ENCODE measurements at regions of chr1 and their contacts with region 1.

Region 1: DNA sequence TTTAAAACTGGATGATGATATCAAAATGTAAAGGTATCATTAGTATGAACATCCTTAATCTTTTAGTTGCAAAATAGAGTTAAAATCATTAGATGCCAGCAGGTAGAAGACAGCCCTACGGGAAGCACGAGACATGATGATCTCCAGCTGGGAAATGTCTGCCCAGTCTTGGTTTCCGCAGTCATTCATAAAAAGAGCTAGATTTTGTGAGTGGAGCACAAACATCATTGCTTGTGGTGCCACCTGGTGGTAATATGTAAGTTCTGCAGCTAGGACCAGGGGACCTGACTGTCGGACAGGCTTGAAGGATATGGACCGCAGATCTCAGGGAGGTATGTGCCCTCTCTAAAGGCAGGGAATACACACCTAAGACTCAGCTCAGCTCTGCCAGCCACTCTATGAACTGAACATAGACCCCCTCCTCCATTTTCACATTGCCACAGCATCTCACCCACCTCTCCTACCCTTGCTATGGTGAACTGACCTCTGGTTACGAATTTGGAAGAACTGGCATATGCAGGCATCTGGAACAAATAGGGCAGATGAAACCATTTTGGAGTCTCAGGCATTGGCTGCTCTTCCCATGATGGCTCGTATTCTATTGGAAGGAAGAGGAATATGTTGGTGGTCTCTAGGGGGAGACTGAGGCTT is 9.2 kb downstream of the FCMR start:
- DNase-seq: peak; percentile 96
- H3K4me3 Mint-ChIP-seq: no peak overlapping the region
- H3K27ac Mint-ChIP-seq: no peak overlapping the region
- H3K4me1 Mint-ChIP-seq: peaks cover 28% of the 10 kb centered on the region
- H3K27me3 Mint-ChIP-seq: peaks cover 43% of the 10 kb centered on the region
- CTCF ChIP-seq: peak; percentile 94

Region 2: GRCh38 chr1:206635080-206635977 is 277.2 kb before region 1 on chr1 and contains the start of gene DYRK3:
- CTCF ChIA-PET with region 1: interaction called, 153 read pairs
- POLR2A ChIA-PET with region 1: interaction called, 20 read pairs
- intact Hi-C with region 1: loop called (anchors 1 kb)
- DNase-seq: peak; percentile 99
- H3K4me3 Mint-ChIP-seq: peak within 1 kb of the TSS; percentile 89
- H3K27ac Mint-ChIP-seq: peak within 1 kb of the TSS; percentile 82
- H3K4me1 Mint-ChIP-seq: peaks cover 38% of the 10 kb centered on the region
- H3K27me3 Mint-ChIP-seq: no peaks in the 10 kb centered on the region
- CTCF ChIP-seq: no peak
- total RNA-seq, gene DYRK3: 45.4 and 58.5 TPM in 2 replicates

Region 3: DNA sequence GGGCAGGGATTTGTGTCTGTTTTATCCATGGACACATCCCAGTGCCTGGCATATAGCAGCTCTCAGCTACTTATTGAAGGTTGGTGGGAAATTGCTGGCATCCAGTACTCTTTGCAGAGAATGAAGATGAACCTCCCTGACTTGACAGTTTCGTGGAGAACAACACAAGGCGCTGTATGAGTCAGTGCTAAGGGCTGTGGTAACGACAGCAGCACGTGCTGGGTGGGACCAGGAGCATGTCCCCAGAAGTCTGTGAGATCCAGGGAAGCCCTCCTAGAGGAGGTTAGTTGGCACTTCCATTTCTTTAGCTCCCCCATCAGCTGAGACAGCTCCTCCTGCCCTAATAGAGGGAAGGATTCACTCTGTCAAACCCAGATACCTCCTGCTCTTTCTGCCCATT is 167.9 kb before region 1 on chr1:
- CTCF ChIA-PET with region 1: interaction called, 93 read pairs
- POLR2A ChIA-PET with region 1: interaction called, 3 read pairs
- intact Hi-C with region 1: loop called (anchors 1 kb)
- DNase-seq: no peak
- H3K4me3 Mint-ChIP-seq: no peak overlapping the region
- H3K27ac Mint-ChIP-seq: no peak overlapping the region
- H3K4me1 Mint-ChIP-seq: peaks cover 5% of the 10 kb centered on the region
- H3K27me3 Mint-ChIP-seq: peaks cover 8% of the 10 kb centered on the region
- CTCF ChIP-seq: no peak

Region 4: GRCh38 chr1:206826405-206826804 is 86.2 kb before region 1 on chr1:
- CTCF ChIA-PET with region 1: interaction called, 52 read pairs
- POLR2A ChIA-PET with region 1: interaction called, 13 read pairs
- intact Hi-C with region 1: no loop called
- DNase-seq: peak; percentile 68
- H3K4me3 Mint-ChIP-seq: no peak overlapping the region
- H3K27ac Mint-ChIP-seq: peak overlapping the region; percentile 73
- H3K4me1 Mint-ChIP-seq: peaks cover 14% of the 10 kb centered on the region
- H3K27me3 Mint-ChIP-seq: no peaks in the 10 kb centered on the region
- CTCF ChIP-seq: no peak

Region 5: DNA sequence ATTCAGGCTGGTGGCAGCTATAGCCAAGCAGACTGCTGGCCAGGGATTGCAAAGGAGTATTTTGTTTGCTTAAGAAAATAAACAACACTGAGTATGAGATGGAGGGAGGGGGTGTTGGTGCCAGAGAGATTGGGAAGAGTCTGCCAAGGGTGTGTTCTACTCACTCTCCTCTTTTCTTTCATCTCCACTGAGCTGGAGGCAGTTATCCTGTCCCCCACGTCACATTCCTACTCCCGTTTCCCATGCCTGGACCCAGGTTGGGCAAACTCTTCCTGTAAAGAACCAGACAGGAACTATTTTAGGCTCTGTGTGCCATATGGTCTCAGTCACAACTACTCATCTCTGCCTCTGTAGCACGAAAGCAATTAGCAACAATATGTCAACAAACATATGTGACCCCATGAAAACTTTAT is 16.7 kb before region 1 on chr1:
- CTCF ChIA-PET with region 1: interaction called, 72 read pairs
- POLR2A ChIA-PET with region 1: interaction called, 271 read pairs
- intact Hi-C with region 1: no loop called
- DNase-seq: peak; percentile 99
- H3K4me3 Mint-ChIP-seq: peak overlapping the region; percentile 2
- H3K27ac Mint-ChIP-seq: peak overlapping the region; percentile 89
- H3K4me1 Mint-ChIP-seq: peaks cover 71% of the 10 kb centered on the region
- H3K27me3 Mint-ChIP-seq: no peaks in the 10 kb centered on the region
- CTCF ChIP-seq: no peak

Region 6: DNA sequence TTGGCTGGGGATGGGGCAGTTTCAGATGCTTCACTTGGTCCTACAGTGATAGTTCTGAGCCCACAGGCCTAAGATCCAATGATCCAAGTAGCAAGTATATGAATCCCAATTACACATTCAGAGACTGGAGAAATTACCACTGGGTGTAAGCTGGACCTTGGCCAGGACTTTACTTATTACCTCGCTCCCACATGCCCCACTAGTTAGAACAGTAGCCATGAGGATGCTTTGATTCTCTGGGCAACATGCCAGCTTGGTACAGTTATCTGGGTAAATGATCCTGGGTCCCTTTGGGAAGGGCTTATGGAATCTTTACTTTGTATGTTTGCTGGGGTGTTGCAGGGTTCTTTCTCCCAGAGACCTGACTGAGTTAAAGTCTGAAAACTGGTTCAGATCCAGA is 62.7 kb after region 1 on chr1:
- CTCF ChIA-PET with region 1: interaction called, 287 read pairs
- POLR2A ChIA-PET with region 1: interaction called, 4 read pairs
- intact Hi-C with region 1: no loop called
- DNase-seq: peak; percentile 22
- H3K4me3 Mint-ChIP-seq: no peak overlapping the region
- H3K27ac Mint-ChIP-seq: no peak overlapping the region
- H3K4me1 Mint-ChIP-seq: no peaks in the 10 kb centered on the region
- H3K27me3 Mint-ChIP-seq: peaks cover 17% of the 10 kb centered on the region
- CTCF ChIP-seq: no peak

Region 7: GRCh38 chr1:207499573-207499972 is 587.0 kb after region 1 on chr1:
- CTCF ChIA-PET with region 1: interaction called, 6 read pairs
- POLR2A ChIA-PET with region 1: no interaction called
- intact Hi-C with region 1: loop called (anchors 2 kb)
- DNase-seq: peak; percentile 90
- H3K4me3 Mint-ChIP-seq: no peak overlapping the region
- H3K27ac Mint-ChIP-seq: no peak overlapping the region
- H3K4me1 Mint-ChIP-seq: peaks cover 6% of the 10 kb centered on the region
- H3K27me3 Mint-ChIP-seq: peaks cover 68% of the 10 kb centered on the region
- CTCF ChIP-seq: peak; percentile 97